CD8-positive, alpha-beta T cell (primary cell): ENCODE measurements at regions of chr10 and their contacts with region 1.

Region 1: GRCh38 chr10:14519785-14520184 is 189.1 kb upstream of the FRMD4A start:
- DNase-seq: no peak
- ATAC-seq: no peak
- H3K4me3 ChIP-seq: no peak overlapping the region
- H3K4me3 Mint-ChIP-seq: no peak overlapping the region
- H3K27ac ChIP-seq: no peak overlapping the region
- H3K27ac Mint-ChIP-seq: no peak overlapping the region
- H3K4me1 ChIP-seq: peaks cover 4% of the 10 kb centered on the region
- H3K4me1 Mint-ChIP-seq: peaks cover 35% of the 10 kb centered on the region
- H3K27me3 ChIP-seq: no peaks in the 10 kb centered on the region
- H3K27me3 Mint-ChIP-seq: no peaks in the 10 kb centered on the region
- CTCF ChIP-seq: no peak

Region 2: GRCh38 chr10:13865758-13866491 is 653.9 kb before region 1 on chr10:
- CTCF ChIA-PET with region 1: no interaction called
- POLR2A ChIA-PET with region 1: no interaction called
- intact Hi-C with region 1: no loop called
- DNase-seq: no peak
- ATAC-seq: no peak
- H3K4me3 ChIP-seq: no peak overlapping the region
- H3K4me3 Mint-ChIP-seq: no peak overlapping the region
- H3K27ac ChIP-seq: no peak overlapping the region
- H3K27ac Mint-ChIP-seq: no peak overlapping the region
- H3K4me1 ChIP-seq: peaks cover 12% of the 10 kb centered on the region
- H3K4me1 Mint-ChIP-seq: peaks cover 15% of the 10 kb centered on the region
- H3K27me3 ChIP-seq: no peaks in the 10 kb centered on the region
- H3K27me3 Mint-ChIP-seq: no peaks in the 10 kb centered on the region
- CTCF ChIP-seq: no peak

Region 3: DNA sequence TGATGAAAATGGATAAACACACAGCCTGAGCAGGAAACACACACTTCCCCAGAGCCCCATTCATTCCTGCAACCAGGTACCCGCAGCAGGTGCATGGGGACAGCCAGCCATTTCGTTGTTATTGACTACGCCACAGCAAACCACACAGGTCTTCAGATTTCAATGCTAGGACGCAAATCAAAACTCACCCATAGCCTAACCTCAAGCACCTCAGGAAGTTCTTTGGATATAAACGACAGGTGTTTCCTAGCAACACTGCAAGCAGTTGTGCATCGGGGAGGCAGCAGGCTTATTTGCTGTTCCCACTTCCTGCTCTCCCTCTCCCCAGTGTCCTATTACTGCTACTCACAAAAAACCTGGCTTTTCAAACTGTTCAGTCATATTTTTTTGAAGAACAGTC is 12.6 kb before region 1 on chr10:
- CTCF ChIA-PET with region 1: no interaction called
- POLR2A ChIA-PET with region 1: no interaction called
- intact Hi-C with region 1: loop called in 1 of 2 experiments (anchors 2 kb)
- DNase-seq: peak in 7 of 9 experiments; percentile 14 to 89 (median 57)
- ATAC-seq: peak; percentile 88
- H3K4me3 ChIP-seq: no peak overlapping the region
- H3K4me3 Mint-ChIP-seq: peak overlapping the region; percentile 54
- H3K27ac ChIP-seq: peak overlapping the region; percentile 38 to 46
- H3K27ac Mint-ChIP-seq: peak overlapping the region; percentile 88
- H3K4me1 ChIP-seq: peaks cover 24% of the 10 kb centered on the region
- H3K4me1 Mint-ChIP-seq: peaks cover 37% of the 10 kb centered on the region
- H3K27me3 ChIP-seq: no peaks in the 10 kb centered on the region
- H3K27me3 Mint-ChIP-seq: no peaks in the 10 kb centered on the region
- CTCF ChIP-seq: no peak